BJ (cell line): ENCODE measurements at regions of chr7 and their contacts with region 1.

Region 1: DNA sequence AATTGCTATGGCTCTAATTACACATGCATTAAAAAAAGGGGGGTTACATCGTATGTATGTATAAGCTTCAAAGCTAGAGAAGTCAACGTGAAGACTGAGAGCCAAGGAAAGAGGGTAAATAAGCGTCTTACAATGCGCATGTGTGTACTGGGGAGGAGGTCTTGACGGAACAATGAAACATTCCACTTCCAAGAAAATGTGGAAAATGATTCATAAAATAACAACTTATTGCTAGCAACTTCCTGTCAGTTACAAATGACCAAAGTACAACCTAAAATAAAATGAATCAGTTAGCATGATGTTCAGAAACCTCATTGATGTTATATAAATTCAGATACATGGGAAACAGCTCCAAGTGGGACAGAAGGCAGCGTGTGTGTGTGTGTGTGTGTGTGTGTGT is 104.1 kb upstream of the RHEB start:
- DNase-seq: no peak
- H3K4me3 ChIP-seq: no peak overlapping the region
- H3K27me3 ChIP-seq: no peaks in the 10 kb centered on the region
- CTCF ChIP-seq: no peak

Region 2: GRCh38 chr7:150876817-150877526 is 746.8 kb before region 1 on chr7:
- CTCF ChIA-PET with region 1: no interaction called
- POLR2A ChIA-PET with region 1: no interaction called
- DNase-seq: no peak
- H3K4me3 ChIP-seq: no peak overlapping the region
- H3K27me3 ChIP-seq: no peaks in the 10 kb centered on the region
- CTCF ChIP-seq: peak; percentile 52

Region 3: GRCh38 chr7:151612374-151613160 is 11.2 kb before region 1 on chr7:
- CTCF ChIA-PET with region 1: interaction called, 10 read pairs
- POLR2A ChIA-PET with region 1: no interaction called
- DNase-seq: no peak
- H3K4me3 ChIP-seq: no peak overlapping the region
- H3K27me3 ChIP-seq: no peaks in the 10 kb centered on the region
- CTCF ChIP-seq: no peak